ENCODE measurements at regions of chr20 and their contacts with region 1.

Region 1: GRCh38 chr20:1437235-1437904 is 29.3 kb downstream of the NSFL1C start:
- DNase-seq: peak; percentile 72
- H3K4me3 ChIP-seq: no peak overlapping the region
- H3K27ac ChIP-seq: no peak overlapping the region
- H3K27me3 ChIP-seq: no peaks in the 10 kb centered on the region
- CTCF ChIP-seq: peak; percentile 89

Region 2: GRCh38 chr20:1313236-1313964 is 124.0 kb before region 1 on chr20:
- CTCF ChIA-PET with region 1: interaction called, 41 read pairs
- POLR2A ChIA-PET with region 1: no interaction called
- DNase-seq: no peak
- H3K4me3 ChIP-seq: peak overlapping the region; percentile 45; the same call in 1 of the 2 replicates
- H3K27ac ChIP-seq: no peak overlapping the region
- H3K27me3 ChIP-seq: no peaks in the 10 kb centered on the region
- CTCF ChIP-seq: peak; percentile 95

Region 3: GRCh38 chr20:1392823-1393506 is 44.4 kb before region 1 on chr20 and contains the start of gene FKBP1A:
- CTCF ChIA-PET with region 1: interaction called, 11 read pairs
- POLR2A ChIA-PET with region 1: no interaction called
- DNase-seq: peak; percentile 67
- H3K4me3 ChIP-seq: peak within 1 kb of the TSS; percentile 88
- H3K27ac ChIP-seq: peak within 1 kb of the TSS; percentile 76
- H3K27me3 ChIP-seq: no peaks in the 10 kb centered on the region
- CTCF ChIP-seq: no peak
- polyA plus RNA-seq, gene FKBP1A: 579 and 685 TPM in 2 replicates

Region 4: DNA sequence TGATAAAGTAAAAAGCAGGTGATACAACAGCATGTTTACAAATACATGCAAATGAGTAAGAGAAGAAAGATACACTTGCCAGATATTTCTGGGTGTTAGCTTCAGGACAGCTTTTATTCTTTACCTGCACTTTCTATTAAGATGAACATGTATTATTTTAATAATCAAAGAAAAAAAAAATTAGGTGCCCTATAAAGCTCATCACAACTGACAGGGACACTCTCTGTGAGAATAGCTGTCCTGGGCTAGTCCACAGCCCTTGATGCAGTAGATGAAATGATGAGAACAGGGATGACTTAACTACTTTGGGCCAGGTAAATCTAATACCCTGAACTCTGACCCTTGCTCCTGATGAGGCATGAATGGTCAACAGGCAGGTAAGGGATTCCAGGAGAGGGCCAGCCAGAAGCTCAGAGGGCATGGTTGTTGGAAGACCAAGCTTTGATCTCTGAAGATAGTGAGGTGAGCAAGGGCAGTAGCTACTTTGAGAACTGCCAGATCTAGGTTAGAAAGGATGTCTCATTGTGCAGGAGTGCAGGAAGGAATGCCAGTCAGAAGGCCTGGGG is 13.6 kb after region 1 on chr20:
- CTCF ChIA-PET with region 1: interaction called, 54 read pairs
- POLR2A ChIA-PET with region 1: no interaction called
- DNase-seq: no peak
- H3K4me3 ChIP-seq: no peak overlapping the region
- H3K27ac ChIP-seq: no peak overlapping the region
- H3K27me3 ChIP-seq: no peaks in the 10 kb centered on the region
- CTCF ChIP-seq: no peak

Region 5: GRCh38 chr20:1456300-1456699 is 18.9 kb after region 1 on chr20:
- CTCF ChIA-PET with region 1: interaction called, 54 read pairs
- POLR2A ChIA-PET with region 1: no interaction called
- DNase-seq: no peak
- H3K4me3 ChIP-seq: no peak overlapping the region
- H3K27ac ChIP-seq: no peak overlapping the region
- H3K27me3 ChIP-seq: no peaks in the 10 kb centered on the region
- CTCF ChIP-seq: no peak

Region 6: DNA sequence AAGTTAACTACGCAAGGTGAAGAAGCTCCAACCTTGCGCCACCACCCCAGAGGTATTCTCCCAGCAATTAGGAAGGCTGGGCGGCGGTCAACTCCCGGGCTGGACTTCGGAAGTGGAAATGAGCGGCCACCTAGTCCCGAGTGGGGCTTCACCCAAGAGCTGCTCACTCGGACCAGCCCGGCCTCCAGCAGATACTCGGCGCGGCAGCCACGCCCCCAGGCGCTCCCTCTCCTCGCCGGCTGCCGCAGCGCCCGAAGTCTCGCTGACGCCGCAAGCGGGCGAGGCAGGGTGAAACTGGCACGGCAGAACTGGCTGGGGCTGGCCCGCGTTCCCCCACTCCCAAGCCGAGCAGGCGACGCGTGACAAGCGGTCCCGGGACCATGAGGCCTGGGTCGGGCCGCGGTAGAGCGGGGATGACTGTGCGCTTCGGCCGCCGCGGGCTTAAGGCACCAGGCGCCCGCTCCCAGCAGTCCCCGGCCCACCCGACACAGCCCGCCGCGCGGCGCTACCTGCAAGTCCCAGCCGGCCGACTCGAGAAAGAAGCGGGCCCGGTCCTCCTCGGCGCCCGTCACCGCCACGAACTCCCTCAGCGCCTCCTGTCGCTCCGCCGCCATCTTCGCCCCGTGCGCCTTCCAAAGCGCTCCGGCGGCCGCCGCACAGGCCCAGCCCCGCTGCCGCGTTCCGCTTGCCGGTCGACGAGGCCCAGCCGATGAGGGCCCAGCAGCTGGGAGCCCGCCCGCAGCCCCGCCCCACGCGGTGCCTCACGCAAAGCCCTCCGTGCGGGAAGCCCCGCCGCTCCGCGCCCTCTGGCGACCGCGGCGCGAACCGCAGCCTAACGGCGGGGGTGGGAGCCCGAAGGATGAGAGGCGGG is 29.1 kb after region 1 on chr20 and contains the start of gene NSFL1C:
- CTCF ChIA-PET with region 1: interaction called, 18 read pairs
- POLR2A ChIA-PET with region 1: no interaction called
- DNase-seq: peak; percentile 85
- H3K4me3 ChIP-seq: peak within 1 kb of the TSS; percentile 88
- H3K27ac ChIP-seq: peak within 1 kb of the TSS; percentile 49
- H3K27me3 ChIP-seq: peaks cover 4% of the 10 kb centered on the region
- CTCF ChIP-seq: peak; percentile 79
- polyA plus RNA-seq, gene NSFL1C: 23.0 and 23.4 TPM in 2 replicates